ENCODE measurements at regions of chr7 and their contacts with region 1.

Region 1: GRCh38 chr7:92447345-92448204 is at the start of gene GATAD1:
- DNase-seq: peak; percentile 86
- H3K4me3 Mint-ChIP-seq: peak within 1 kb of the TSS; percentile 77
- H3K27ac Mint-ChIP-seq: peak within 1 kb of the TSS; percentile 83
- H3K4me1 Mint-ChIP-seq: peaks cover 8% of the 10 kb centered on the region
- H3K27me3 Mint-ChIP-seq: no peaks in the 10 kb centered on the region
- CTCF ChIP-seq: no peak
- total RNA-seq, gene GATAD1: 22.5 and 26.0 TPM in 2 replicates

Region 2: DNA sequence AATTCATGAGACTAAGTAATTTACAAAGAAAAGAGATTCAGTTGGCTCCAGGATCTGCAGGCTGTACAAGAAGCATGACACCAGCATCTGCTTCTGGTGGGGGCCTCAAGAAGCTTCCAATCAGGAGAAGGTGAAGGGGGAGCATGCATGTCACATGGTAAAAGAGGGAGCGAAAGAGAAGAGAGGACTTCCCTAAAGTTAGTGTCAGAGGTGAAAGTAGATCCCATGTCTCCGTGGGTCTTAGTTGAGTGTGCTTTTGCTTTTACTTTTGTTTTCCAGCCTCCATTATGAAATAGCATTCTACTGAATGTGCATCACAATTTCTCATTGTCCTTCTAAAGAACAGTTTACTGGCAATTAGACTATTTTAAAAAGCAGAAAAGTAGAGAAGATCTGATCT is 1396.9 kb before region 1 on chr7:
- CTCF ChIA-PET with region 1: no interaction called
- intact Hi-C with region 1: loop called (anchors 10 kb)
- DNase-seq: no peak
- H3K4me3 Mint-ChIP-seq: no peak overlapping the region
- H3K27ac Mint-ChIP-seq: no peak overlapping the region
- H3K4me1 Mint-ChIP-seq: no peaks in the 10 kb centered on the region
- H3K27me3 Mint-ChIP-seq: no peaks in the 10 kb centered on the region
- CTCF ChIP-seq: no peak

Region 3: DNA sequence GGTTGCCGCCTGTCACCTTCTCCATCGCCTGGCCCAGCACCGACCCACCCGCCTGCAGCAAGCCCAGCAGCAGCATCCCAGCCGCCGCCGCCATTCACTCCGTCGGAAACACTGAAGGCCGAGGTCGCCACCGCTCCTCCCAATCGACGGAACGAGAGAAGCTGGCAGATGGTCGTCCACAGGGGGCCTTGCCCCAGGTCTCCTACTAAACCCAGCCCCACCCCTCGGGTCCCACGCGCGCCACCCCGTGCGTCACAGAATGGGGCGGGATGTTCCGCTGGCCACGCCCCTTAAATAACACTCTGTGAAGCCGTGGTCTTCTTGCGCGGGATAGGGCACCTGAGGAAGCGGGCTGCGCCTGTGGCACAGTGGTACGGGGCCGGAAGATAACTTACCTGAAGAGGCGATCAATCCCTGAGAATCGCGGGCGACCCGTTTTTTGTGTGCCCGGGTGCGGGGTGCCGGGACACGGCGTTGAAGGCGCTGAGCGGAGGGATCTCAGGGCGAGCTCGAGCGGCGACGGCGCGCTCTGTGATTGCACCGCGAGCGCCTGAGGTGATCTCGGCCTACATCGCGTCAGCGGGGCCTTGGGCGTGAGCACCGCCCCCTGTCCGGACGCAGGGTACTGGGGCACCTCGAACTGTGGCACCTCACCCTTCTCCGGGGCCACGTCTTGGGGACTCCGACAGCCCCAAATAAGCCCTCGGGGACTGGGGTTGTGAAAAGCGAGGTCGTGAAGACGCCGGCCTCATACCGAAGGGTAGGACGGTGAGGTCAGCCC is 313.1 kb before region 1 on chr7 and contains the start of gene CYP51A1:
- CTCF ChIA-PET with region 1: no interaction called
- intact Hi-C with region 1: loop called (anchors 5 kb)
- DNase-seq: peak; percentile 87
- H3K4me3 Mint-ChIP-seq: peak within 1 kb of the TSS; percentile 96
- H3K27ac Mint-ChIP-seq: peak within 1 kb of the TSS; percentile 76
- H3K4me1 Mint-ChIP-seq: peaks cover 31% of the 10 kb centered on the region
- H3K27me3 Mint-ChIP-seq: no peaks in the 10 kb centered on the region
- CTCF ChIP-seq: no peak
- total RNA-seq, gene CYP51A1: 99.5 and 105 TPM in 2 replicates

Region 4: GRCh38 chr7:92425321-92425947 is 22.1 kb before region 1 on chr7:
- CTCF ChIA-PET with region 1: interaction called, 33 read pairs
- intact Hi-C with region 1: loop called (anchors 2 kb)
- DNase-seq: peak; percentile 43
- H3K4me3 Mint-ChIP-seq: peak overlapping the region; percentile 67
- H3K27ac Mint-ChIP-seq: peak overlapping the region; percentile 26
- H3K4me1 Mint-ChIP-seq: peaks cover 9% of the 10 kb centered on the region
- H3K27me3 Mint-ChIP-seq: no peaks in the 10 kb centered on the region
- CTCF ChIP-seq: no peak

Region 5: DNA sequence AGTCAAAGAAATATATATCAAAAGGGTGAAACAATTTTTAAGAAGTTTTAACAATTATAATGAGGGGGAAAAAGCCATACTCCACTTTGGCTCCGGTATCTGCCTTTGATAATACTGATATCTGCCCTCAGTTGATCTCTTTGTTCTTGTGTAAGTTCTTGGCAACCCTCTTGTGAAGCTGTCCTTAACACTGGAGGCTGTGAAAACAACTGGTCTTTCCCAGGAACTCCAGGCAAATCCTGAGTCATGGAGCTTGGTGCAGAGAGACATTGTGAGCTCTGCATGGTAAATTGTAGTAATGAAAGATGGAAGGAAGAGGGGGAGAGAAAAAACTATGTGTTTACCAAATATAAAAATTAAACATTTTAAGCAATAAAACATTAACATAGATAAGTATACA is 42.1 kb after region 1 on chr7:
- CTCF ChIA-PET with region 1: no interaction called
- intact Hi-C with region 1: no loop called
- DNase-seq: no peak
- H3K4me3 Mint-ChIP-seq: no peak overlapping the region
- H3K27ac Mint-ChIP-seq: no peak overlapping the region
- H3K4me1 Mint-ChIP-seq: no peaks in the 10 kb centered on the region
- H3K27me3 Mint-ChIP-seq: no peaks in the 10 kb centered on the region
- CTCF ChIP-seq: no peak